B cell (primary cell): ENCODE measurements at regions of chr15 and their contacts with region 1.

Region 1: GRCh38 chr15:74873036-74873755 is at the start of gene SCAMP2:
- DNase-seq: peak; percentile 96
- ATAC-seq: peak; percentile 96
- H3K4me3 ChIP-seq: peak within 1 kb of the TSS; percentile 64 to 91 (median 83)
- H3K4me3 Mint-ChIP-seq: peak within 1 kb of the TSS; percentile 95
- H3K27ac ChIP-seq: peak within 1 kb of the TSS; percentile 94 to 95
- H3K27ac Mint-ChIP-seq: peak within 1 kb of the TSS; percentile 98
- H3K4me1 ChIP-seq: peaks cover 37 to 52% of the 10 kb centered on the region in 2 donors
- H3K4me1 Mint-ChIP-seq: peaks cover 42% of the 10 kb centered on the region
- H3K27me3 ChIP-seq: no peaks in the 10 kb centered on the region
- H3K27me3 Mint-ChIP-seq: no peaks in the 10 kb centered on the region
- CTCF ChIP-seq: no peak
- total RNA-seq, gene SCAMP2: 105 and 111 TPM in 2 replicates

Region 2: DNA sequence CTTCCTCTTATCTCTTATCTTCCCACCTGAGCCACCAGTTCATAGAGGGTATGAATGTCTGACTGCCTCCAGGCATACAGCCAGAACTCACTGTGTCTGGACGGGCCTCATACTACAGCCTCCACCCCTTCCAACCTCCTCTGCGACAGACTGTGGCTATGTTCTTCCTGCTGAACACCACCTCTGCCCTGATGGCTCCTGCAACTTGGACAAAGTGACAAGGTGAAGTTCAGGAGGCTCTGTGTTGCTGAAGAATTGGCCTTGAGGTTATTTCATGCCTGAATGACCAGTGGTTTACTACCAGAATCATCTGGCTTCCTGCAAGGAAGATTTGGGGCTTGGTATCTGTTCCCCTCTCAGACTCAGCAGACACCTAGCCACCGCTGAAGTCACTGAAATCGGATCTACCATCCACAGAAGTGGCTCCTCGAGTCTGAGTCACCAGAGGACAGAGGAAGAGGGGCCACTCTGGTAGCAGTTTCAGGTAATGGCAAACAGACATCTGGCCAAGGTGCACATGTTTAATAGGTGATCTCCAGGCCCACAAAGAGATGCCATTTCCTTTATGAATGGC is 16.0 kb before region 1 on chr15:
- CTCF ChIA-PET with region 1: interaction called, 7 read pairs
- POLR2A ChIA-PET with region 1: interaction called, 7 read pairs
- intact Hi-C with region 1: loop called (anchors 2 kb)
- DNase-seq: peak; percentile 61
- ATAC-seq: peak; percentile 67
- H3K4me3 ChIP-seq: no peak overlapping the region
- H3K4me3 Mint-ChIP-seq: peak overlapping the region; percentile 69
- H3K27ac ChIP-seq: peak overlapping the region in 1 of 2 donors; percentile 67
- H3K27ac Mint-ChIP-seq: peak overlapping the region; percentile 82
- H3K4me1 ChIP-seq: peaks cover 34 to 46% of the 10 kb centered on the region in 2 donors
- H3K4me1 Mint-ChIP-seq: peaks cover 40% of the 10 kb centered on the region
- H3K27me3 ChIP-seq: no peaks in the 10 kb centered on the region
- H3K27me3 Mint-ChIP-seq: no peaks in the 10 kb centered on the region
- CTCF ChIP-seq: no peak

Region 3: DNA sequence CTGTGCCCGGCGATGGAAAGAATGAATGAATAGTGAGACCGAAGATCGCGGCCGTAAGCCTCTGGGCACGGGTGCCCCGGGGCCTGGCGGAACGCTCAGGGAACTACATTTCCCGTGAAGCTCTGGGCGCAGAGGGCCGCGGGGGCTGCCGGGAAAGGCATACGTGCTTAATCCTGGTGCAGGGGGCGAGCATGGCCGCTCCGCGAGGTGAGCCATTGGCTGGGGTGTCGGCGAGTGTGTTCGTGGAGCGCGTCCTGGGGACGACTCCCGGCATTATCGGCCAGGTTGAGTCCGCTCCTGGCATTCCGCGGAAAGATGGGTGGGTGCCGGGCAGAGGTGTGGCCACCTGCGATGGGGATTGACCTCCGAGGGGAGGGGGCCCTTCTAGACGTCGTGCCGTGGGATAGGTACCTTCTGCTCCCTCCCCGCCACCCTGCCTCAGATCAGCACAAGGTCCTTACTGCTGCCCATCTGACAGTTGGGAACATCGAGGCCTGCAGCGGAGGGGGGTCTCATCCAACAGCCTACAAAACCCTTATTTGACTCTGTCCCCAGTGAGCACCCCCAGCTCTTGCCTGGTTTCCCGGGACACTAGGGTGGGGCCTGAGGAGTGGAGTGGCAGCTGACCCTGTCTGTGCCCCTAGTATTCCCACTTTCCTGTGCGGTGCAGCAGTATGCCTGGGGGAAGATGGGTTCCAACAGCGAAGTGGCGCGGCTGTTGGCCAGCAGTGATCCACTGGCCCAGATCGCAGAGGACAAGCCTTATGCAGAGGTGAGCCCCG is 16.9 kb after region 1 on chr15 and contains the start of gene MPI:
- CTCF ChIA-PET with region 1: interaction called, 4 read pairs
- POLR2A ChIA-PET with region 1: interaction called, 4 read pairs
- intact Hi-C with region 1: loop called (anchors 1 kb)
- DNase-seq: peak; percentile 87
- ATAC-seq: peak; percentile 99
- H3K4me3 ChIP-seq: peak within 1 kb of the TSS; percentile 53 to 94 (median 87)
- H3K4me3 Mint-ChIP-seq: peak within 1 kb of the TSS; percentile 93
- H3K27ac ChIP-seq: peak within 1 kb of the TSS; percentile 74 to 77
- H3K27ac Mint-ChIP-seq: peak within 1 kb of the TSS; percentile 74
- H3K4me1 ChIP-seq: peaks cover 25 to 38% of the 10 kb centered on the region in 2 donors
- H3K4me1 Mint-ChIP-seq: peaks cover 39% of the 10 kb centered on the region
- H3K27me3 ChIP-seq: no peaks in the 10 kb centered on the region
- H3K27me3 Mint-ChIP-seq: no peaks in the 10 kb centered on the region
- CTCF ChIP-seq: no peak
- total RNA-seq, gene MPI: 37.2 and 41.3 TPM in 2 replicates

Region 4: DNA sequence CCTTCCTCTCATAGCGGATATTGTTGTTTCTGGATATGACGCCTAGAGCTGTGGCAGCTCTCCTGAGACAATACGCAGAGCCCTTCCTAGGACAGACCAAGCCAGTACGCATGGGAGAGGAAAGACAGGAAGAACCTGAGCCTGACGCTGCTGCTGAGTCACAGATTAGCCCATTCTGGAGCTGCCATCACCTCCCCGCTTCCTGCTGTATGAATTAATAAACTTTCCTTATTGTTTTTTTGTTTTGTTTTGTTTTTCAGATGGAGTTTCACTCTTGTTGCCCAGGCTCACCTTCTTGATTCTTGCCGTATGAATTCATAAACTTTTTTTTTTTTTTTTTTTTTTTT is 217.2 kb after region 1 on chr15:
- CTCF ChIA-PET with region 1: no interaction called
- POLR2A ChIA-PET with region 1: no interaction called
- intact Hi-C with region 1: no loop called
- DNase-seq: no peak
- ATAC-seq: no peak
- H3K4me3 ChIP-seq: no peak overlapping the region
- H3K4me3 Mint-ChIP-seq: no peak overlapping the region
- H3K27ac ChIP-seq: no peak overlapping the region
- H3K27ac Mint-ChIP-seq: no peak overlapping the region
- H3K4me1 ChIP-seq: peaks cover 8 to 15% of the 10 kb centered on the region in 2 donors
- H3K4me1 Mint-ChIP-seq: peaks cover 21% of the 10 kb centered on the region
- H3K27me3 ChIP-seq: peaks cover 0 to 12% (median 1%) of the 10 kb centered on the region in 4 experiments
- H3K27me3 Mint-ChIP-seq: peaks cover 10% of the 10 kb centered on the region
- CTCF ChIP-seq: no peak